HAP-1 (cell line): ENCODE measurements at regions of chr3 and their contacts with region 1.

Region 1: GRCh38 chr3:192566706-192567290 is 160.5 kb downstream of the FGF12 start:
- DNase-seq: peak; percentile 69 to 81
- H3K4me3 ChIP-seq: no peak overlapping the region
- H3K4me1 ChIP-seq: peaks cover 3% of the 10 kb centered on the region
- H3K27me3 ChIP-seq: 0 out of 2 replicates have a peak, but pooled peaks cover 3% of the 10 kb centered on the region

Region 2: DNA sequence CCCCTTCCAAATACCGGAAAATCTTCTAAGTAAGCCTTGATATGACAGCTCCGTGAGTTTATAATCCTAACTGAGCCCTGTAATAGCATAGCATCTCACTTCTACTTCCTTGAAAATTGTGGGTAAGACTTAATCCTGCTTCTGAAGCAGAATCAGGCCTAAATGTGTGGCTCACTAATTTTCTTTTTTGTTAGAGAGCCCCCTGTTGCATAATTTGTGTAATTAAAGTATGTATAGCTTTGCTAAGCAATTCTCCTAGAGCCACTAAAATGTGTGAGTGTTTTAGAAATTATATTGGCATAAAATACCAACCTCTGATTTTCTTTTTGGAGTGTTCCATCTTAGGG is 143.8 kb before region 1 on chr3:
- in situ Hi-C with region 1: no loop called
- DNase-seq: no peak
- H3K4me3 ChIP-seq: no peak overlapping the region
- H3K4me1 ChIP-seq: no peaks in the 10 kb centered on the region
- H3K27me3 ChIP-seq: 0 out of 2 replicates have a peak, but pooled peaks cover 5% of the 10 kb centered on the region

Region 3: DNA sequence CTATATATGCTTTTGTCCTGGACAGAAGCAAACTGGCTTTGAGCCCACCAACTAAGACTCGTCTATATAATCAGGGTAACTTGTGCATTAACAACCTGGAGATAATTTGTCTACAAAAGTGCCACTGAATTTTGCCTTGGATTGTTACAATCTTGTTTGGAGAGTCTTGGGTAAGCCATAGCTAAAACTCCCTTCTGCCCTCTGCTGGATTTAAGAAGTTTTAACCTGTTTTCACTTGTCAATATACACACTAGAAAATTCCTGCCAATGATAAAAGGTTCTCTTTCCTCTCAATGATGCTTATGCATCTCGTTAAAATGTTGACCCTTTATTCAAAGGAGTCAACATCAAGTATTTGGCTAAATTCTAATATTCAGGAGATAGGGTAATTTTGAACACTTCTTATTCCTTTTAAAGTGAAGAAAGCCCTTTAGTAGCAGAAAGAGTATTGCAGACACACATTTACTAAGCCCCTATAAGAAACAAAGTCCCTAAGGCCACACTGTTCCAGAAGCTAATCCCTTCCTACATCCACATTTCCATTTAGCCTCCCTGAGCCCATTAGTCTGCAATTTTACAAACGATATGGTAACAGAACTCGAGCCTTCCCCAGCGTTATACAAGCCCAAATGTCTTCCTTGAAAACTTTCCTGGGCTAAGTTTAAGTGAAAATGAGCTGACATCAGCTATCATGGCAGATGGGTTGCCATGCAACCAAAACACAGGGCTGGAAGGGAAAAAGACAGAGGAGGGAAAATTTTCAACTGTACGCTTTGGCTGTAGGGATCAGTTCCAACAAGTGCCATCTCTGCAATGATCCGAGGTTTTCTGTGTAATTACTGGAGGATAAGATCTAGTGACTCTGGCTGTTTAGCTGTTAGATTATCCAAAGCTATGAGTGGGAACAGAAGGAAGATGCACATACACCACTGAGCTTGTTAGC is 236.4 kb after region 1 on chr3:
- in situ Hi-C with region 1: loop called (anchors 10 kb)
- DNase-seq: peak in 1 of 2 experiments; percentile 65
- H3K4me3 ChIP-seq: no peak overlapping the region
- H3K4me1 ChIP-seq: peaks cover 4% of the 10 kb centered on the region
- H3K27me3 ChIP-seq: no peaks in the 10 kb centered on the region